ENCODE measurements at regions of chr10 and their contacts with region 1.

Region 1: GRCh38 chr10:125048101-125048864 is 106.4 kb downstream of the ZRANB1 start:
- DNase-seq: no peak
- H3K4me3 ChIP-seq: no peak overlapping the region
- H3K27me3 ChIP-seq: no peaks in the 10 kb centered on the region
- CTCF ChIP-seq: peak; percentile 99

Region 2: GRCh38 chr10:125000366-125001312 is 47.6 kb before region 1 on chr10:
- CTCF ChIA-PET with region 1: interaction called, 15 read pairs
- POLR2A ChIA-PET with region 1: no interaction called
- DNase-seq: no peak
- H3K4me3 ChIP-seq: no peak overlapping the region
- H3K27me3 ChIP-seq: no peaks in the 10 kb centered on the region
- CTCF ChIP-seq: no peak

Region 3: DNA sequence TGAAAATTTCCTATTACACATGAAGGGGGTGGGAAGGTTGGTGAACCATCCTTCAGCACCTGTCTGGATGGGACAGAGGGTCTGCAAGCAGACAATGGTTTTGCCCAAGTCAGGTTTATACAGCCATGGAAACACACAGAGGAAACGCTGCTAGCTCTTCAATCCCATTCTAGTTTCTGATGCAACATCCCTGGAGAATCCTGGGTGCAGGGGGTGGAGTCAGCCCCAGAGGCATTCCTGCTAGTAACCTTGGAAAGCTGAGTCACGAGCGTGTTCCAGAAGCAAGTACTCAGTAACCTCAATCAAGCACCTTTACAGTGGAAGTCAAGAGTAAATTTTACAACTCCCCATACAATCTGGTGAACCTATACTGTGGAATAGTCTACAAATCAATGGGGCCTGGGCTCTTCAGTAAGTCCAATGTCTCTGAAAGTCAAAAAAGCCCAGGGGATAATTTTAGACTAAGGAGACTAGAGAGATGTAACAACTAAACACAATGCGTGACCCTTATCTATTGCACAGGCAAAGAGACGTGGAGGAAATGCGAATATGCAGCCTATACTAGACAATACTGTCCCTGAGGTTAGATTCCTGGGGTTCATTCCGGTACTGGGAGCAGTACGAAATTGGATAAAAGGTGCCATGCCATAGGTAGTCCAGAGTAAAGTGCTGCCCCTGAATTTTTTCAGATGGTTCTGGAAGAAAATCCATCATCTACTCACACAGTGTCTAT is 11.0 kb before region 1 on chr10:
- CTCF ChIA-PET with region 1: interaction called, 29 read pairs
- POLR2A ChIA-PET with region 1: no interaction called
- DNase-seq: no peak
- H3K4me3 ChIP-seq: no peak overlapping the region
- H3K27me3 ChIP-seq: no peaks in the 10 kb centered on the region
- CTCF ChIP-seq: no peak

Region 4: GRCh38 chr10:125149036-125149675 is 100.9 kb after region 1 on chr10:
- CTCF ChIA-PET with region 1: interaction called, 19 read pairs
- POLR2A ChIA-PET with region 1: no interaction called
- DNase-seq: no peak
- H3K4me3 ChIP-seq: no peak overlapping the region
- H3K27me3 ChIP-seq: no peaks in the 10 kb centered on the region
- CTCF ChIP-seq: no peak